ENCODE measurements at regions of chr12 and their contacts with region 1.

Region 1: GRCh38 chr12:122265931-122266771 is at the start of gene VPS33A:
- DNase-seq: peak; percentile 95
- H3K4me3 ChIP-seq: peak within 1 kb of the TSS; percentile 70 to 99 (median 83)
- H3K27ac ChIP-seq: peak within 1 kb of the TSS; percentile 90
- H3K4me1 ChIP-seq: peaks cover 8% of the 10 kb centered on the region
- H3K27me3 ChIP-seq: no peaks in the 10 kb centered on the region
- CTCF ChIP-seq: no peak
- total RNA-seq, gene VPS33A: 15.8 to 16.4 TPM

Region 2: DNA sequence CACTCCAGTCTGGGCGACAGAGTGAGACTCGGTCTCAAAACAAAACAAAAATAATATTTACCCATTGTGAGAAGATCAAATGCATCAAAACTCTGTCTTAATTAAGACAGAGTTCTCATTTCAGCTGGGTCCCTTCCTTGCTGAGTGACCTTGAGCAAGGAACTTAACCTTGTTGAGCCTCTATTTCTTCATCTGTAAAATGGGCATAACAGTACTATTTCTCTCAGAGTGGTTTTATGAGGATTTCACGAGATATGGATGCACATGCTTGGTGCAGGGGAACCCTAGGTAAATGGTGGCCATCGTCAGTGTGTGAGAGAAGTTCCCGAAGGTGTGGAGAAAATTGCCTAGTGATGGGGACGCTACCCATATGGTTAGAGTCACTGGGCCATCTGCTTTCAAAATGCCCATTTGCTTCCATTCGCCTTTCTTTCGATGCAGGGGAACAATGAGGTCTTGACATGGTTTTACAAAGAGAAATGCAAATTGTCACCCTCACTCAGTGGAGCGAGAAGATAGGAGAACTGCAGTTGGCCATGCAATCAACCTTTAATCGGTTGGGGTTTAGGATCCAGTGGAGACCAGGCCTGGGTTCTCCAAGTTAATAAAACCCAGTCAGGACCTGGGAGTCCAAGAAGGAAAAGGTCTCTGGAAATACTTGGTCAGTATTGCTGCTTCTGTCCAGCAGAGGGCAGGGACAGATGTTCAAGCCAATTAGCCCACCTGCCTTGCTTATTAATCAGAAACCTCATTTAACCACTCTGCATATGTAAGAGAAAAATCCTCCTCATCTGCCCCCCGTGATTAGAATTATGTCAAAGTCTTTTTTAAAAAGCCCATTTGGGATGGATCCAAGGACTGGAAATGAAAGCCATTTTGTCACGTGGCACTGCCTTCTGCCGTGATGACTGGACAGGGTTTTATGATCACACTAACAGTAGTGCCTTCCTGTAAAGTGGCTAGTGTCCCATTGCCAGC is 310.6 kb before region 1 on chr12:
- CTCF ChIA-PET with region 1: no interaction called
- dilution Hi-C with region 1: no loop called
- in situ Hi-C with region 1: no loop called
- intact Hi-C with region 1: no loop called
- DNase-seq: peak; percentile 10
- H3K4me3 ChIP-seq: no peak overlapping the region
- H3K27ac ChIP-seq: no peak overlapping the region
- H3K4me1 ChIP-seq: no peaks in the 10 kb centered on the region
- H3K27me3 ChIP-seq: no peaks in the 10 kb centered on the region
- CTCF ChIP-seq: peak; percentile 61 to 72

Region 3: GRCh38 chr12:122064025-122064777 is 201.9 kb before region 1 on chr12:
- CTCF ChIA-PET with region 1: no interaction called
- dilution Hi-C with region 1: no loop called
- in situ Hi-C with region 1: no loop called
- intact Hi-C with region 1: no loop called
- DNase-seq: peak; percentile 37
- H3K4me3 ChIP-seq: no peak overlapping the region
- H3K27ac ChIP-seq: no peak overlapping the region
- H3K4me1 ChIP-seq: peaks cover 16% of the 10 kb centered on the region
- H3K27me3 ChIP-seq: no peaks in the 10 kb centered on the region
- CTCF ChIP-seq: peak; percentile 10 to 21

Region 4: GRCh38 chr12:122130150-122130549 is 136.0 kb before region 1 on chr12:
- CTCF ChIA-PET with region 1: no interaction called
- dilution Hi-C with region 1: no loop called
- in situ Hi-C with region 1: no loop called
- intact Hi-C with region 1: loop called (anchors 2 kb)
- DNase-seq: peak; percentile 55
- H3K4me3 ChIP-seq: no peak overlapping the region
- H3K27ac ChIP-seq: no peak overlapping the region
- H3K4me1 ChIP-seq: no peaks in the 10 kb centered on the region
- H3K27me3 ChIP-seq: no peaks in the 10 kb centered on the region
- CTCF ChIP-seq: no peak

Region 5: DNA sequence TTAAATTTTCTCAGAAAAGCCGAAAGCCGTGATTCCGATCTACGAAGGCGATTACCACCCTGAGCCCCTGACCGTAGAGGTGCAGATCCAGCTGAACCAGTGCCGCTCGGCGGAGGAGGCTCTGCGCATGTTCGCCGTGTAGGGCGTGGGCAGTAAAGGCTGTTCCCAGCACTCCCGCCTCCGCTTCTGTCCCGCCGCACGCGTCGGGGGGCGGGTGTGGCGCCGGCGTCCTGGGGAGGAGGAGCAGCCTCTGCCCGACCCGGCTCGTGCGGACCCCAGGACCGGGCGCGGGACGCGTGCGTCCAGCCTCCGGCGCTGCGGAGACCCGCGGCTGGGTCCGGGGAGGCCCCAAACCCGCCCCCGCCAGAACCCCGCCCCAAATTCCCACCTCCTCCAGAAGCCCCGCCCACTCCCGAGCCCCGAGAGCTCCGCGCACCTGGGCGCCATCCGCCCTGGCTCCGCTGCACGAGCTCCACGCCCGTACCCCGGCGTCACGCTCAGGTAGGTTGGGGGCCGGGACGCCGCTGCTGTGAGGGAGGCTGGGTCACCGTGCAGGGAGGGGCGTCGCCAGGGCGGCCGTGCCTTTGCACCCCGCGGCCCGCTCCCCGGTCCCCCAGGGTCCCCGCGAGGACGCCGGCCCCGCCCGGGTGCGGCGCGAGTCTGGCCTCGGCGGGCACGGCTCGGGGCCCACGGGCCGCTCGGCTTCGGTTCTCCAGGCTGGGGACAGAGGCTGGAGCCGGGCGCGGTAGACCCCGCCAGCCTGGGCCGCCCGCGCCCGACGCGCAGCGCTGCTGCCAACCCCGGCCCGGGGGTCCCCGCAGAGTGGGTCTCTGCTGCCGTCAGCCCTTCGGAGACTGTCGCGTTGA is 62.6 kb before region 1 on chr12 and contains the start of gene B3GNT4:
- CTCF ChIA-PET with region 1: interaction called, 31 read pairs
- dilution Hi-C with region 1: no loop called
- in situ Hi-C with region 1: no loop called
- intact Hi-C with region 1: loop called (anchors 5 kb)
- DNase-seq: peak; percentile 71
- H3K4me3 ChIP-seq: peak within 1 kb of the TSS; percentile 46 to 74 (median 65)
- H3K27ac ChIP-seq: no peak within 1 kb of the TSS
- H3K4me1 ChIP-seq: peaks cover 15% of the 10 kb centered on the region
- H3K27me3 ChIP-seq: no peaks in the 10 kb centered on the region
- CTCF ChIP-seq: no peak
- total RNA-seq, gene B3GNT4: 0.67 to 2.7 TPM

Region 6: GRCh38 chr12:122225683-122226407 is 40.3 kb before region 1 on chr12 and contains the start of gene DIABLO:
- CTCF ChIA-PET with region 1: no interaction called
- dilution Hi-C with region 1: no loop called
- in situ Hi-C with region 1: no loop called
- intact Hi-C with region 1: loop called (anchors 1 kb)
- DNase-seq: peak; percentile 100
- H3K4me3 ChIP-seq: peak within 1 kb of the TSS; percentile 67 to 99 (median 97)
- H3K27ac ChIP-seq: peak within 1 kb of the TSS; percentile 95
- H3K4me1 ChIP-seq: peaks cover 21% of the 10 kb centered on the region
- H3K27me3 ChIP-seq: no peaks in the 10 kb centered on the region
- CTCF ChIP-seq: no peak
- total RNA-seq, gene DIABLO: 54.5 to 55.0 TPM

Region 7: GRCh38 chr12:122467986-122468385 is 201.8 kb after region 1 on chr12:
- CTCF ChIA-PET with region 1: no interaction called
- dilution Hi-C with region 1: no loop called
- in situ Hi-C with region 1: no loop called
- intact Hi-C with region 1: no loop called
- DNase-seq: peak; percentile 99
- H3K4me3 ChIP-seq: no peak overlapping the region
- H3K27ac ChIP-seq: peak overlapping the region; percentile 99
- H3K4me1 ChIP-seq: peaks cover 28% of the 10 kb centered on the region
- H3K27me3 ChIP-seq: no peaks in the 10 kb centered on the region
- CTCF ChIP-seq: no peak

Region 8: GRCh38 chr12:122563361-122563760 is 297.2 kb after region 1 on chr12:
- CTCF ChIA-PET with region 1: no interaction called
- dilution Hi-C with region 1: no loop called
- in situ Hi-C with region 1: no loop called
- intact Hi-C with region 1: no loop called
- DNase-seq: no peak
- H3K4me3 ChIP-seq: no peak overlapping the region
- H3K27ac ChIP-seq: no peak overlapping the region
- H3K4me1 ChIP-seq: no peaks in the 10 kb centered on the region
- H3K27me3 ChIP-seq: no peaks in the 10 kb centered on the region
- CTCF ChIP-seq: no peak

Measured in mammary epithelial cell (primary cell).